Activated naive CD8-positive, alpha-beta T cell treated with anti-CD3 and anti-CD28 coated beads, Interleukin-2, amount 10 ng/mL, durations not matched to agents 7 days and 5 days (primary cell): ENCODE measurements at regions of chr12 and their contacts with region 1.

Region 1: GRCh38 chr12:47837190-47838171 is 17.8 kb upstream of the HDAC7 start:
- DNase-seq: peak; percentile 74
- ATAC-seq: no peak
- H3K4me3 Mint-ChIP-seq: peak overlapping the region; percentile 35
- H3K27ac Mint-ChIP-seq: peak overlapping the region; percentile 62
- H3K4me1 Mint-ChIP-seq: peaks cover 53% of the 10 kb centered on the region
- H3K27me3 Mint-ChIP-seq: no peaks in the 10 kb centered on the region

Region 2: DNA sequence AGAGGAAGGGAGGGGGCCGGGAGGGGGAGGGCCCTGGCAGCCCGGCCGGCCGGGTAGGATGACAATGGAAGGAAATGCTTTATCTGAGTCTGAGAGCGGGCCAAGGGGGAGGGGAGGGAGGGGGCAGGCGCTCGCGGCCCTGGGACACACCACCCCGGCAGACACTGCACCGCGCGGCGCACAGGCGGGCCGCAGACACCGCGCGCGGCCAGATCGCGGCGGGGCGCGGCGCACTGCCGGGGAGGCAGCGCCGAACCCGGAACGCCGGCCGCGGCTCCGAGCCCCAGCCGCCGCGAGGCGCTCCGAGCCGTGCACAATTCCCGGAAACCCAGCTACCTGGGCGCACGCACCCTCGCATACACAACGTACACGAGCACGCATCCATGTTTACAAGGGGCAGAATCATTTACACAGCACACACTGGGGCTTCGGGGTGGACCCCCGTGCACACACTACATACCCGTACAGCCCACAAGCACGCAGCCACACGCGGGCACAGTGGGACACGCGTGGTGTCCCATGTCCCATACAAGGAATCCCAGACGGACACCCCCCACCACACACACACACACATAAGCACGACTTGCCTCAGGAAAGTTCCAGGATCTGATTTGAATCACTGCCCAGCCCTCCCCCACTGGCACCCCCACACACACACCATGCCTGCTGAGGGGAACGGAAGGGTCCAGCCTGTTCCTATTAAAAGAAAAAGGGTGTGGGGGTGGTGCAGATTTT is 17.4 kb before region 1 on chr12 and contains the start of gene HDAC7:
- POLR2A ChIA-PET with region 1: interaction called, 298 read pairs
- DNase-seq: peak; percentile 81
- ATAC-seq: peak; percentile 58
- H3K4me3 Mint-ChIP-seq: peak within 1 kb of the TSS; percentile 89
- H3K27ac Mint-ChIP-seq: peak within 1 kb of the TSS; percentile 98
- H3K4me1 Mint-ChIP-seq: peaks cover 58% of the 10 kb centered on the region
- H3K27me3 Mint-ChIP-seq: no peaks in the 10 kb centered on the region
- total RNA-seq, gene HDAC7: 200 to 215 TPM

Region 3: GRCh38 chr12:47896633-47897032 is 59.2 kb after region 1 on chr12:
- POLR2A ChIA-PET with region 1: no interaction called
- DNase-seq: no peak
- ATAC-seq: no peak
- H3K4me3 Mint-ChIP-seq: no peak overlapping the region
- H3K27ac Mint-ChIP-seq: no peak overlapping the region
- H3K4me1 Mint-ChIP-seq: peaks cover 72% of the 10 kb centered on the region
- H3K27me3 Mint-ChIP-seq: no peaks in the 10 kb centered on the region